A673 (cell line): ENCODE measurements at regions of chr5 and their contacts with region 1.

Region 1: DNA sequence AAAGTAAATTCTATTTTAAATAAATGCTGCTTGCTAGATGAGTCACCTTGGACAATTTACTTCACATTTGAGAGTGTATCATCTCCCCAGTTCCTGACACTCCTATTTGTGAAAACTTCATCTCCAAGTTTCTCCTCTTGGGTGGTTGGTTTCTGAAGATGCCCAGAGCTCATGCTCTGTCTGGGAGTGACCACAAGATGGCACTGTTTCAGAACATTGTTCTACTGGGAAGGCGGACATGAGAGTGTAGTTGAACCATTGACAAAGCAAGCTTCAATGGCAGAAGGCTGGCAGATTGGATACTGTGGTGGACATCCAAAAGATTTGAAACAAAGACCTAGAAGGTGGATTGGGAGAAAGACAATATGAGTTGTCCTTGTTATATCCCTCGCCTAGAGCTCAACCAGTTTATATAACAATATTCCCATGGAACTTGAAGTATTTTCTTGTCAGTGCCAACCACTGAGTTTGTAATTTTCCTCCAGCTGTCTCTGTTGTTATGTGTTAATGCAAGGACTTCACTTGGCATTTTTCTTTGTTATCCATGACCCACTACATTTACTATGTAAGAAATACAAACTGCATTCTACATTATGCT is 234.3 kb upstream of the ANKH start:
- DNase-seq: peak; percentile 70
- H3K4me3 ChIP-seq: no peak overlapping the region
- H3K27ac ChIP-seq: no peak overlapping the region
- H3K4me1 ChIP-seq: no peaks in the 10 kb centered on the region
- H3K27me3 ChIP-seq: no peaks in the 10 kb centered on the region
- CTCF ChIP-seq: peak; percentile 86

Region 2: GRCh38 chr5:15821506-15821905 is 715.6 kb after region 1 on chr5:
- CTCF ChIA-PET with region 1: interaction called, 3 read pairs
- POLR2A ChIA-PET with region 1: no interaction called
- intact Hi-C with region 1: loop called (anchors 5 kb)
- DNase-seq: no peak
- H3K4me3 ChIP-seq: no peak overlapping the region
- H3K27ac ChIP-seq: no peak overlapping the region
- H3K4me1 ChIP-seq: no peaks in the 10 kb centered on the region
- H3K27me3 ChIP-seq: no peaks in the 10 kb centered on the region
- CTCF ChIP-seq: no peak

Region 3: GRCh38 chr5:15995341-15996052 is 889.6 kb after region 1 on chr5:
- CTCF ChIA-PET with region 1: no interaction called
- POLR2A ChIA-PET with region 1: no interaction called
- intact Hi-C with region 1: loop called (anchors 2 kb)
- DNase-seq: peak; percentile 37
- H3K4me3 ChIP-seq: no peak overlapping the region
- H3K27ac ChIP-seq: no peak overlapping the region
- H3K4me1 ChIP-seq: no peaks in the 10 kb centered on the region
- H3K27me3 ChIP-seq: no peaks in the 10 kb centered on the region
- CTCF ChIP-seq: peak; percentile 54